ENCODE measurements at regions of chr1 and their contacts with region 1.

Region 1: GRCh38 chr1:1033009-1033587 is 13.2 kb downstream of the AGRN start:
- DNase-seq: peak; percentile 98
- ATAC-seq: peak; percentile 93
- H3K4me3 ChIP-seq: peak overlapping the region in 4 of 5 experiments; percentile 20 to 50 (median 38)
- H3K4me3 Mint-ChIP-seq: peak overlapping the region; percentile 78
- H3K27ac ChIP-seq: no peak overlapping the region
- H3K27ac Mint-ChIP-seq: peak overlapping the region; percentile 56
- H3K4me1 ChIP-seq: peaks cover 29 to 30% of the 10 kb centered on the region in 2 donors
- H3K4me1 Mint-ChIP-seq: peaks cover 24% of the 10 kb centered on the region
- H3K27me3 ChIP-seq: peaks cover 0 to 32% (median 5%) of the 10 kb centered on the region in 4 experiments
- H3K27me3 Mint-ChIP-seq: peaks cover 11% of the 10 kb centered on the region
- CTCF ChIP-seq: peak; percentile 89

Region 2: GRCh38 chr1:1019122-1019999 is 13.7 kb before region 1 on chr1:
- CTCF ChIA-PET with region 1: interaction called, 17 read pairs
- POLR2A ChIA-PET with region 1: interaction called, 5 read pairs
- intact Hi-C with region 1: loop called (anchors 1 kb)
- DNase-seq: peak; percentile 89
- ATAC-seq: peak; percentile 91
- H3K4me3 ChIP-seq: peak overlapping the region in 4 of 5 experiments; percentile 13 to 53 (median 44)
- H3K4me3 Mint-ChIP-seq: peak overlapping the region; percentile 73
- H3K27ac ChIP-seq: no peak overlapping the region
- H3K27ac Mint-ChIP-seq: peak overlapping the region; percentile 67
- H3K4me1 ChIP-seq: peaks cover 10 to 28% of the 10 kb centered on the region in 2 donors
- H3K4me1 Mint-ChIP-seq: peaks cover 9% of the 10 kb centered on the region
- H3K27me3 ChIP-seq: peaks cover 0 to 20% (median 6%) of the 10 kb centered on the region in 4 experiments
- H3K27me3 Mint-ChIP-seq: no peaks in the 10 kb centered on the region
- CTCF ChIP-seq: peak; percentile 47

Region 3: DNA sequence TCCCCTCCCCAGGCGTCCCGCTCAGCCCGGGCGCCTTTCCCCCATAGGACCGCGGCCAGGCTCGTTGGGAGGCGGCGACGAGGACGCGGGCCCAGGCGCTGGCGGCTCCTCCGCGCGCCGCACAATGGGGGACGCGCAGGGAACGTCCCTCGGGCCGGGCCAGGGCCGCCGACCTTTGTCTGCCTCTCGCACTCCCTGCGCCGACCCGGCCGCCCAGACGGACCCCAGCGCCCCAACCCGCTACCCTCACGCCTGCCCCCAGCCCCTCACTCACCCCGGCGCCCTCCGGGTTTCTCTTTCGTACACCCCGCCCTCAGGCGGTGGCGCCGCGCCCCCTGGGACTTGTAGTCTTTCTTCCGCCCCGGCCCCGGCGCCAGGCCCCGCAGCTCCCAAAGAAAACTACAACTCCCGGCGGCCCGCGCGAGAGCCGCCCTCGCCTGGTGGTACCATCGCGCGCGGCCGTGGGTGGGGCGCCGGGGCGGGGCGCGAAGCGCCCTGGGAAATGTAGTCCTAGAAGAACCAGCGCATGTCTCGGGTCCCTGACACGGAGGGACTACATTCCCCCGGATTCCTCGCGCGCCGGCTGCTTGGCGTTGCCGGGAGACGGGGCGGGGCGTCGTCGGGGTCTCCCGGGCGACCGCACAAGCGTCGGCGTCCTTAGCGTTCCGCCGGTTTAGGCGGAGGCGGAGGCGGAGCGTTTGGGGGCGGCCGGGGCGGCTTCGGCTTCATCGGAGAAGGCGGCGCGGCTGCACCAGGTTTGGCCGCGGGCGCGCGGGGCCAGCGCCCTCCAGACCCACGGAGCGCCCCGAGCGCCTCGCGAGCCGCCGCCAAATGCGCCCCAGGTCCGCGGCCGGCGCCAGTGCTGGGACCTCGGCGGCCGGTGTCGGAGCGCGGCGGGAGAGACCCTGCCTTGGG is 82.9 kb after region 1 on chr1 and contains the start of gene C1orf159:
- CTCF ChIA-PET with region 1: interaction called, 9 read pairs
- POLR2A ChIA-PET with region 1: interaction called, 3 read pairs
- intact Hi-C with region 1: loop called (anchors 2 kb)
- DNase-seq: peak; percentile 98
- ATAC-seq: peak; percentile 92
- H3K4me3 ChIP-seq: peak within 1 kb of the TSS; percentile 23 to 80 (median 68)
- H3K4me3 Mint-ChIP-seq: peak within 1 kb of the TSS; percentile 88
- H3K27ac ChIP-seq: peak within 1 kb of the TSS in 1 of 2 donors; percentile 76
- H3K27ac Mint-ChIP-seq: peak within 1 kb of the TSS; percentile 88
- H3K4me1 ChIP-seq: peaks cover 10 to 16% of the 10 kb centered on the region in 2 donors
- H3K4me1 Mint-ChIP-seq: peaks cover 16% of the 10 kb centered on the region
- H3K27me3 ChIP-seq: peaks cover 0 to 29% (median 3%) of the 10 kb centered on the region in 4 experiments
- H3K27me3 Mint-ChIP-seq: peaks cover 9% of the 10 kb centered on the region
- CTCF ChIP-seq: no peak
- total RNA-seq, gene C1orf159: 23.0 and 25.3 TPM in 2 replicates

Region 4: GRCh38 chr1:1200851-1201810 is 168.0 kb after region 1 on chr1:
- CTCF ChIA-PET with region 1: no interaction called
- POLR2A ChIA-PET with region 1: no interaction called
- intact Hi-C with region 1: loop called (anchors 10 kb)
- DNase-seq: peak; percentile 94
- ATAC-seq: peak; percentile 84
- H3K4me3 ChIP-seq: peak overlapping the region in 4 of 5 experiments; percentile 28 to 58 (median 52)
- H3K4me3 Mint-ChIP-seq: peak overlapping the region; percentile 60
- H3K27ac ChIP-seq: no peak overlapping the region
- H3K27ac Mint-ChIP-seq: peak overlapping the region; percentile 32
- H3K4me1 ChIP-seq: peaks cover 17 to 18% of the 10 kb centered on the region in 2 donors
- H3K4me1 Mint-ChIP-seq: peaks cover 12% of the 10 kb centered on the region
- H3K27me3 ChIP-seq: peaks cover 0 to 19% (median 8%) of the 10 kb centered on the region in 4 experiments
- H3K27me3 Mint-ChIP-seq: no peaks in the 10 kb centered on the region
- CTCF ChIP-seq: no peak

Region 5: DNA sequence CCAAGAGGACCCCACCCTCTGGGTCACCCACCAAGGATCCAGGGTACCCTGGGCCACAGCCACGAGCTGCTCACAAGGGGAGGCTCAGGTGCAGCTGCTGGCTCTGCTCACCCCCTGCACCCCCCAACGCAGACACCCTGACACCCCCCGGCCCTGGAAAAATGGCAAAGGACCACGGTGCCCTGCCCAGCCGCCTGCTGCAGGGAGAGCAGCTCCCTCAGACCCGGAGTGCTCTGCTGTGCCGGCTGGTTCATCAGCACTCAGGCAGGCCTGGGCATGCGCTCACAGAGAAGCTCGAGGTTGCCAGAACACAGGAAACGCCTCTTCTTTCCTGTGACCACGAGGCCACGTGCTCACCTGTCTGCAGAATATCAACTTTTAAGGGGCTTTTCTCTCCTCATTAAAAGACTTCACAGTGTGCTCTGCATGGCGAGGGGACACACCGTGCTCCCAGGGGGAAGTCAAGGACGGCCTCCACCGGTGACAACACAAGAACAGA is 217.7 kb after region 1 on chr1:
- CTCF ChIA-PET with region 1: interaction called, 18 read pairs
- POLR2A ChIA-PET with region 1: no interaction called
- intact Hi-C with region 1: no loop called
- DNase-seq: peak; percentile 85
- ATAC-seq: peak; percentile 71
- H3K4me3 ChIP-seq: no peak overlapping the region
- H3K4me3 Mint-ChIP-seq: peak overlapping the region; percentile 63
- H3K27ac ChIP-seq: peak overlapping the region; percentile 11 to 84
- H3K27ac Mint-ChIP-seq: peak overlapping the region; percentile 88
- H3K4me1 ChIP-seq: peaks cover 27 to 30% of the 10 kb centered on the region in 2 donors
- H3K4me1 Mint-ChIP-seq: peaks cover 16% of the 10 kb centered on the region
- H3K27me3 ChIP-seq: peaks cover 0 to 16% (median 8%) of the 10 kb centered on the region in 4 experiments
- H3K27me3 Mint-ChIP-seq: no peaks in the 10 kb centered on the region
- CTCF ChIP-seq: no peak

Region 6: DNA sequence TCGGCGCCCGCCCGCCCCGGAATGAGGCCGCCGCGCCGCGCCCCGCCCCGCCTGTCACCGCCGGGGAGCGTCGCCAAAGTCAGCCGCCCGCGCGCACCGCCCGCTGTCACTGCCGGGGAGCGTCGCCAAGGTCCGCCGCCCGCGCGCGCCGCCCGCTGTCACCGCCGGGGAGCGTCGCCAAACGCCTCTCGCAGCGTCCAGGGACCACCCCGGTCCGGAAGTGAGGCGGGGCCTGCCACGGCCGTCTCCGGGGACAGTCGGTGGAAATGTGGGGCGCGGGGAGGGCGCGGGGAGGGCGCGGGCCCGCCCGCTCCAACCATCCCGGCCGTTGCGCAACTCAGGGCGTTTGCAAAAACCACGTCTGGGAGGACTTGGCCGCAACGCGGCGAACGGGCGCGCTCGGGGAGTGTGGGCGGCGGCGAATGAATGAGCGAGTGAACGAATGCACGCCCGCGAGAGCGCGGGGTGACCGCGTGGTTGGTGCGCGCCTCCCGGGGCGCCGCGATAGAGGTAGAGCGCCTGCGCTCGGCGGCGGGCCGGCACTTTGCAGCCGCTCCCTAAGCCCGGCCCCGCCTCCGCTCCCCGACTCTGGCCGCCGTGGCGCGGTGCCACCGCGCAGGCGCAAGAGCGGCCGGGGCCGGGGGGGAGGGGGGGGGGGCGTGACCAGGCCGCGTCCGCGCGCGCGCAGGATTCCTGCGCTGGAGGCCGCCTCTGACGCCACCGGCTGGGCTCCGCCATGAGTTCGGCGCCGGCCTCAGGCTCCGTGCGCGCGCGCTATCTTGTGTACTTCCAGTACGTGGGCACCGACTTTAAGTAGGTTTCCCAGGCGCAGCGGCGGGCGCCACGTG is 275.0 kb after region 1 on chr1 and contains the starts of genes ACAP3 and PUSL1:
- CTCF ChIA-PET with region 1: interaction called, 4 read pairs
- POLR2A ChIA-PET with region 1: no interaction called
- intact Hi-C with region 1: loop called (anchors 5 kb)
- DNase-seq: peak; percentile 95
- ATAC-seq: peak; percentile 62
- H3K4me3 ChIP-seq: peak within 1 kb of the TSS; percentile 31 to 92 (median 82)
- H3K4me3 Mint-ChIP-seq: peak within 1 kb of the TSS; percentile 90
- H3K27ac ChIP-seq: peak within 1 kb of the TSS; percentile 84 to 89
- H3K27ac Mint-ChIP-seq: peak within 1 kb of the TSS; percentile 95
- H3K4me1 ChIP-seq: peaks cover 34 to 47% of the 10 kb centered on the region in 2 donors
- H3K4me1 Mint-ChIP-seq: peaks cover 33% of the 10 kb centered on the region
- H3K27me3 ChIP-seq: no peaks in the 10 kb centered on the region
- H3K27me3 Mint-ChIP-seq: no peaks in the 10 kb centered on the region
- CTCF ChIP-seq: no peak
- total RNA-seq, gene ACAP3: 40.7 and 49.1 TPM in 2 replicates
- total RNA-seq, gene PUSL1: 15.7 and 17.9 TPM in 2 replicates

Region 7: GRCh38 chr1:1374929-1375662 is 342.0 kb after region 1 on chr1 and contains the start of gene AURKAIP1:
- CTCF ChIA-PET with region 1: interaction called, 7 read pairs
- POLR2A ChIA-PET with region 1: interaction called, 4 read pairs
- intact Hi-C with region 1: loop called (anchors 1 kb)
- DNase-seq: peak; percentile 100
- ATAC-seq: peak; percentile 89
- H3K4me3 ChIP-seq: peak within 1 kb of the TSS; percentile 61 to 93 (median 78)
- H3K4me3 Mint-ChIP-seq: peak within 1 kb of the TSS; percentile 84
- H3K27ac ChIP-seq: peak within 1 kb of the TSS; percentile 75 to 95
- H3K27ac Mint-ChIP-seq: peak within 1 kb of the TSS; percentile 89
- H3K4me1 ChIP-seq: peaks cover 19 to 37% of the 10 kb centered on the region in 2 donors
- H3K4me1 Mint-ChIP-seq: peaks cover 11% of the 10 kb centered on the region
- H3K27me3 ChIP-seq: no peaks in the 10 kb centered on the region
- H3K27me3 Mint-ChIP-seq: no peaks in the 10 kb centered on the region
- CTCF ChIP-seq: peak; percentile 39
- total RNA-seq, gene AURKAIP1: 61.7 and 67.0 TPM in 2 replicates